Activated naive CD4-positive, alpha-beta T cell treated with anti-CD3 and anti-CD28 coated beads, Interleukin-2, amount 10 ng/mL, durations not matched to agents 7 days and 5 days (primary cell): ENCODE measurements at regions of chr5 and their contacts with region 1.

Region 1: GRCh38 chr5:54905943-54906537 is 79.4 kb downstream of the ESM1 start:
- DNase-seq: peak; percentile 83
- H3K4me3 Mint-ChIP-seq: no peak overlapping the region
- H3K27ac Mint-ChIP-seq: no peak overlapping the region
- H3K4me1 Mint-ChIP-seq: peaks cover 50% of the 10 kb centered on the region
- H3K27me3 Mint-ChIP-seq: peaks cover 45% of the 10 kb centered on the region

Region 2: DNA sequence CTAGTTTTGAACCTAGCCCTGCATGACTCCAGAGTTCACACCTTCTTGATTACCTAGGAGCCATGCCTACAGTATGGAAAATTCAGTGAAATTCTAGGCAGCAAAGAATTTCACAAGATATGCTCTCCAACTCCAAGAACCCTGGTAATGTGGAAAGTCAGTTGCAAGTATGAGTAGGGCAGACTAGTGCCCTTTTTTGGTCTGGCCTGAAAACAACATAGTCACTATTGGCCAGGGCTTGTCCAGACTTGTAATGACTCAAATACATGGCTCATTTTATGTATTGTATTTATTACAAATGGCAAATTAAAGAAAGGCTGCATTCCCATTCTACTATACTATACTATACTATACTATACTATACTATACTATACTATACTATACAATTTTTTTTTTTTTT is 81.0 kb before region 1 on chr5:
- CTCF ChIA-PET with region 1: no interaction called
- DNase-seq: no peak
- H3K4me3 Mint-ChIP-seq: no peak overlapping the region
- H3K27ac Mint-ChIP-seq: no peak overlapping the region
- H3K4me1 Mint-ChIP-seq: no peaks in the 10 kb centered on the region
- H3K27me3 Mint-ChIP-seq: peaks cover 25% of the 10 kb centered on the region

Region 3: DNA sequence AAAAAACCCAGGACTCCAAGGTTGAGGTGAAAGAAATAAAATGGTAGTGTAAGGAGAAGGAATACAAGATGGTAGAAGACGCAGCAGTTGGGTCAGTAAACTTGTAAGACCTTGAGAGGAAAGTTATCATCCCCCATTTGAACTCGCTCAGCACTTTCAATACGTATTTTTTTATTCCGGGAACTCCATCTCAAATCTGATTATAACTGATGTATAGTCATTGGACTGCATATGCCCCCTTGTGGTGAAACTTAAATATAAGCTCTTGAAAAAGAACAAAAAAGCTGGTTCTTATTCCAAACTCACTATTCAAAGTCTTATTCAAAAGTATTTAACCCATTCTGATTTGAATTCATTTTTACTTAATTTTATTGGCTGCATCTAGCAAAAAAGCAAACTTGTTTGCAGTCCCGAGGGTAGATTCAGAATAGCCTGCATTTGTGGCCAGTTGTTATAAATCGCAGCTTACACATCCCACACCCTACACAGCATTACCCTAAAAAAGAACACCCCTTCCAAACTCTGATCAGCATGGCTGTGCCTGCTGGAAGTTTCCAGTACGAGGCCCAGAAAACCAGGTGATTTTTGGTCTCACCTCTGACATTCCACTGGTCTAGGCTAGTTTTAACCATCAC is 38.6 kb before region 1 on chr5:
- CTCF ChIA-PET with region 1: interaction called, 13 read pairs
- DNase-seq: no peak
- H3K4me3 Mint-ChIP-seq: no peak overlapping the region
- H3K27ac Mint-ChIP-seq: no peak overlapping the region
- H3K4me1 Mint-ChIP-seq: peaks cover 20% of the 10 kb centered on the region
- H3K27me3 Mint-ChIP-seq: peaks cover 42% of the 10 kb centered on the region

Region 4: GRCh38 chr5:54944364-54944763 is 38.3 kb after region 1 on chr5:
- CTCF ChIA-PET with region 1: interaction called, 66 read pairs
- DNase-seq: peak; percentile 56
- H3K4me3 Mint-ChIP-seq: no peak overlapping the region
- H3K27ac Mint-ChIP-seq: no peak overlapping the region
- H3K4me1 Mint-ChIP-seq: peaks cover 18% of the 10 kb centered on the region
- H3K27me3 Mint-ChIP-seq: peaks cover 13% of the 10 kb centered on the region

Region 5: DNA sequence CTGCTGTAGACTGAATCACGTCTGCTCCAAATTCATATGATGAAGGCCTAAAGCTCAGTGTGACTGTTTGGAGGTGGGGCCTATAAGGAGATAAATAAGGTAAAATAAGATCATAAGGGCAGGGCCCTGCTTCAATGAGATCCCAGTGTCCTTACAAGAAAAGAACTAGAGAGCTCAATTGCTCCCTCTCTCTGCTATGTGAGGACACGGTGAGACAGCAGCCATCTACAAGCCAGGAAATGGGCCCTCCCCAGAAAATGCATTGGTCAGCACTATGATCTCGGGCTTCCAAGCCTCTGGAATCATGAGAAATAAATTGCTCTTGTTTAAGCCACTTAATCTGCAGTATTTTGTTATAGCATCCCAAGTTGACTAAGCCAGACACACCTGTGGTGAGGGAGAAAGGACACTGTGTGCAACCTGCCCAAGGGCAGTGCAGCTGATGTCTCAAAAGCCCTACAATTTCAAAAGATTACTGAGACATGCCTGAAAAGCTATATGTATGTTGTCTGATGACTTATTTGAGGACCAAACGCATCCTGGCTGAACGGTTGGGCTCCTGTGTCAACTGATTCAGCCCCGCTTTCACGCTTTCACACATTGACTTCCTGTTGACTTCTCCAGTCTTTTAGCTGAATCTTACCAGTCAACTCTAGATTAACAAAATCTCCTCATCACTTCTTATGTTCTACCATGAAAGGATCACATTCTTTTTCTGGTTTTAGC is 131.2 kb after region 1 on chr5:
- CTCF ChIA-PET with region 1: interaction called, 30 read pairs
- DNase-seq: peak; percentile 82
- H3K4me3 Mint-ChIP-seq: no peak overlapping the region
- H3K27ac Mint-ChIP-seq: peak overlapping the region; percentile 99
- H3K4me1 Mint-ChIP-seq: peaks cover 46% of the 10 kb centered on the region
- H3K27me3 Mint-ChIP-seq: no peaks in the 10 kb centered on the region

Region 6: DNA sequence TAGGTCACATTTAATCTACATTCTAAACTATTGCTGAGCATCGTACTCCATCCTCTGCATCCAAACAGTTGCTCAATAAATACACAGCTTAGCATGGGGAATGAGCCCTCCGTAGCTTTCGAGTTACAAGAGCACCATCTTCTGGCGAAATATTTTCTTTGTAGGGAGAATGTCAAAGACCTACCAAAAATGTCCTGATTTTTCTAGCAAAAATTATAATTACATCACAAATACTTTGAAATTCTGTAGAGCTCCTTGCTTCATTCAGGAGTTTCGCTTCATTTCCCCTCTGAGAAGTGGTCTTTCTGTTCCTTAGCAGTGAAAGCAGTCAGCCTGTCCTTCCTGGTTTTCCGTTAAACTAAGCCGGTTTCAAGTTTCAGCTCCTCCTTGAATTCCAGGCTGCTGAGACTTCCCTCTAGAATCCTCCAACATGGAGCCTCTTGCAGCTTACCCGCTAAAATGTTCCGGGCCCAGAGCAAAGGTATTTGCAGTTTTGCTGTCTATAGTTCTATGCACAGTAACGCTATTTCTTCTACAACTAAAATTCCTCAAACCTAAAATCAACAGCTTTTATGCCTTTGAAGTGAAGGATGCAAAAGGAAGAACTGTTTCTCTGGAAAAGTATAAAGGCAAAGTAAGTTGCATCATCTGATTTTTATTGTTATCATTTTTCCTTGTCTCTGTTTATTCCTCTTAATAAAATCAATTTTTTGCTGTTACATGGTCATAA is 253.9 kb after region 1 on chr5 and contains the start of gene GPX8:
- CTCF ChIA-PET with region 1: interaction called, 148 read pairs
- DNase-seq: peak; percentile 33
- H3K4me3 Mint-ChIP-seq: no peak within 1 kb of the TSS
- H3K27ac Mint-ChIP-seq: no peak within 1 kb of the TSS
- H3K4me1 Mint-ChIP-seq: peaks cover 3% of the 10 kb centered on the region
- H3K27me3 Mint-ChIP-seq: peaks cover 46% of the 10 kb centered on the region